Activated CD4-positive, alpha-beta memory T cell treated with anti-CD3 and anti-CD28 coated beads, Interleukin-2, amount 10 ng/mL, durations not matched to agents 7 days and 5 days (primary cell): ENCODE measurements at regions of chr3 and their contacts with region 1.

Region 1: DNA sequence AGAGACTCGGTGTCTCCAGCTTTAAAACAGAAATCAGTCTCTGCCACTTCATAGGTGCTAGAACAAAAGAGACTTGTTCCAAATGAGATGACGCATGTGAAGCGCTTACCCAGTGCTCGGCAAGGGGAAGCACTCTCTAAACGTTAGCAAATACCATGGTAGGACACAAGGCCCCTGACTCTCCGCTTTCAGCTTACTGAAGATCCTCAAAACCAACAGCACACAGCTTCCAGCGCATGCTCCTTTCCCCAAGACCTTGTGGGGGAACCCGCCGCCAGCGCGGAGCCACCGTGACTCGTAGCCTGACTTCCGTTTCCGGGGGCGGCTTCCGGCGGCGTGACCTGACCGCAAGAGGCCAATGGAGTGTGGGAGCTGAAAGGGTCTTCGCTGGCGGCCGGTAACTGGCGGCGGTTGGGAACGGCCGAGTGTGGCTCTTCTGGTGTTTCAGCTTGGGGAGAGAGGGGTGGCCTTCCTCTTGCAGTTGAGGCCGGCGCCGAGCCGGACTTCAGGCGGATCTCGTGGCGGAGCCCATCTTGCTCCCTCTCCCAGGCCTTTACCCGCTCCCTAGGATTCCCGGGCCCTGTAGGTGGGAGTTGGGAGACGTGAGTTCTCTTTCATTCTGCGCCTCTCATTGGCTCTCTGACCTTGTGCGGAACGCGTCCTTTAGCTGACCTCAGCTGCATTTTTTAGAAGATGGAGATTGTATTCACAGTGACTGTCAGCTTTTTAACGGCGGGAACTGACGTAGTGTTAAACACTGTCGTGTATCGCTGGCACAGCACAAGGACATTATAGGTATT is at the start of gene THUMPD3:
- DNase-seq: peak; percentile 92
- H3K4me3 Mint-ChIP-seq: peak within 1 kb of the TSS; percentile 95
- H3K27ac Mint-ChIP-seq: peak within 1 kb of the TSS; percentile 98
- H3K4me1 Mint-ChIP-seq: peaks cover 39% of the 10 kb centered on the region
- H3K27me3 Mint-ChIP-seq: no peaks in the 10 kb centered on the region
- total RNA-seq, gene THUMPD3: 44.3 to 47.2 TPM

Region 2: DNA sequence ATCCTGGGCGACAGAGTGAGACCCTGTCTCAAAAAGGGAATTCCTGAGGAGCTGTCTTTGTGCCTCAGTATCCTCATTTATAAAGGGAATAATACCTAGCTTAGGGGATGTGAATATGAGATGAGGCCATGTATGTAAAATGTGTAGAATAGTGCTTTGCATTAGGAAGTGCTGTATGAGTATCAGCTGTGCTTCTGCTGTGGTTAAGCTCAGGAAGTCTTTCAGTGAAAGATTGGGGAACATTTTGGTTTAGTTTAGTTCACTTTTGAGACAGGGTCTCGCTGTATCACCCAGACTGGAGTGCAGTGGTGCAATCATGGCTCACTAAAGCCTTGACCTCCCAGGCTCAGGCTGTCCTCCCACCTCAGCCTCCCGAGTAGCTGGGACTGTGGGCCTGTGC is 10.5 kb after region 1 on chr3:
- CTCF ChIA-PET with region 1: interaction called, 12 read pairs
- POLR2A ChIA-PET with region 1: interaction called, 24 read pairs
- DNase-seq: no peak
- H3K4me3 Mint-ChIP-seq: no peak overlapping the region
- H3K27ac Mint-ChIP-seq: peak overlapping the region; percentile 16
- H3K4me1 Mint-ChIP-seq: peaks cover 21% of the 10 kb centered on the region
- H3K27me3 Mint-ChIP-seq: no peaks in the 10 kb centered on the region

Region 3: GRCh38 chr3:9384141-9384853 is 21.4 kb after region 1 on chr3:
- CTCF ChIA-PET with region 1: no interaction called
- POLR2A ChIA-PET with region 1: interaction called, 19 read pairs
- DNase-seq: no peak
- H3K4me3 Mint-ChIP-seq: no peak overlapping the region
- H3K27ac Mint-ChIP-seq: no peak overlapping the region
- H3K4me1 Mint-ChIP-seq: peaks cover 5% of the 10 kb centered on the region
- H3K27me3 Mint-ChIP-seq: no peaks in the 10 kb centered on the region

Region 4: DNA sequence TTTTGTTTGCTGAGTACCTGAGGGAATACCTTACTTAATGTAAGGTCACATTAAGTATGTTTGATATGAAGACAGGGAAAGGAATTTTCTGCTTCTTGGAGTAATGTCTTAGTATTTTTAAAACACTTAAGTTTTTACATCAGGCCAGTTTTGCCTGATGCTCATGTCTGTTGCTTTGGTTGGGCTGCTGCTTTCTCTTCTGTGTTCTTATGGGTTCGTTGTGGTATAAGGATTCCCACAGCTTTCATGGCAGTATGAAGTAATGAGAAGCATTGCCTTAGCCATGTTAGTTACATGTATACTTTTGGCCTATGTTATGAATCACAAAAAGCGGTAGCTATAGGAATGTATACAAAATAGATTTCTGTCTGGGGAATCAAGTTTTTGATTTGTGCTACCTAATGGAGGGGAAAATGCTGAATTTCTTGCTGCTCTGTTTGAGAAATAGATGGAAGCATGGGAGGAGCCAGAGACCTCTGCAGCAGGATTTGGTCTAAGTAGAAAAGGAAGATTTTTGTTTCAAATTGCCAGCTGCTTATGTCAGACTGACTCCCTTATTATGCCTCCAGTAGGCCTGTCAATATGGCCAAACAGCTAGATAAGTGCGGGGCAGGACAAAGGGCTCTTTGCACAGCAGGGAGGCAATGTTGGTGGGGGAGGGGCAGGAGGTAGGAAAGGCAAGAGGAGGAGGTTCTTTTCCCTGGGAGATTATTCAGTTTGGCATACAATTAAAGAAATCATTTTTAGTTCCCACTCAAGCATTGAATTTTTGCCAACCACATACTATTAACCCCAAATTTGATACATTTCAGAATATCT is 39.7 kb after region 1 on chr3:
- CTCF ChIA-PET with region 1: interaction called, 10 read pairs
- POLR2A ChIA-PET with region 1: interaction called, 257 read pairs
- DNase-seq: no peak
- H3K4me3 Mint-ChIP-seq: no peak overlapping the region
- H3K27ac Mint-ChIP-seq: no peak overlapping the region
- H3K4me1 Mint-ChIP-seq: peaks cover 60% of the 10 kb centered on the region
- H3K27me3 Mint-ChIP-seq: no peaks in the 10 kb centered on the region

Region 5: DNA sequence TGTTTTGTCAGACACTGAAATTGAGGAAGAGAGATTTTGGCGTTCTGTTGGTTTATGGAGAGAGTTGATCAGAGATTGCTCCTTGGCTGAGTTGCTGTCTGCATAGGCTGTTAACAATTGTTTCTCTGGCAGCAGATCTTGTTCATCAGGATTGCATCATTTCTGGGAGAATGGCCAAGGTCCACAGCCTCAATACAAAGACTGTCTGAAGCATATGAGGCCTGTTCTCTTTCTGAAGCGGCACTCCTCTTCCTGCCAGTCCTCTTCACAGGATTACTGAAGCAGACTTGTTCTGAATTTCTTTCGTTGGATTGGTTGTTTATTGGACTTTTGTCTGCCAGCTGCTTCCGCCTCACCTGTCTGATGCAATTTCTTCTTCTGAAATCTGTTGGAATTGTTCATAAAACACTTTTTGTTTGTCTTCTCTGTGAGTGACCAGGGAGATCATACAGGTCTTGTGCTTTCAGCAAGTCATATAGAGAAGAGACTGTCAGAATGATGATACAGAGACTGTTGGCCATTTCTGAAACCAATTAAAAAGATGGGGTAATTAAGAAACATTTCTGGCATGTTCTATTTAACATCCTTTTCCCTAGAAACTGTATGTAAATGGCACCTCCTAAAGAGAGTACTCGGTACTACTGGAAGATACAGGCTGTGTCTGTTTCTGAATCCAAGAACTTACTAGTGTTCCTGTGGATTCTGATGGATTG is 59.9 kb after region 1 on chr3:
- CTCF ChIA-PET with region 1: interaction called, 4 read pairs
- POLR2A ChIA-PET with region 1: interaction called, 11 read pairs
- DNase-seq: no peak
- H3K4me3 Mint-ChIP-seq: no peak overlapping the region
- H3K27ac Mint-ChIP-seq: peak overlapping the region; percentile 60
- H3K4me1 Mint-ChIP-seq: peaks cover 38% of the 10 kb centered on the region
- H3K27me3 Mint-ChIP-seq: no peaks in the 10 kb centered on the region

Region 6: GRCh38 chr3:9569054-9569453 is 206.1 kb after region 1 on chr3:
- CTCF ChIA-PET with region 1: no interaction called
- POLR2A ChIA-PET with region 1: no interaction called
- DNase-seq: no peak
- H3K4me3 Mint-ChIP-seq: no peak overlapping the region
- H3K27ac Mint-ChIP-seq: no peak overlapping the region
- H3K4me1 Mint-ChIP-seq: no peaks in the 10 kb centered on the region
- H3K27me3 Mint-ChIP-seq: peaks cover 8% of the 10 kb centered on the region

Region 7: DNA sequence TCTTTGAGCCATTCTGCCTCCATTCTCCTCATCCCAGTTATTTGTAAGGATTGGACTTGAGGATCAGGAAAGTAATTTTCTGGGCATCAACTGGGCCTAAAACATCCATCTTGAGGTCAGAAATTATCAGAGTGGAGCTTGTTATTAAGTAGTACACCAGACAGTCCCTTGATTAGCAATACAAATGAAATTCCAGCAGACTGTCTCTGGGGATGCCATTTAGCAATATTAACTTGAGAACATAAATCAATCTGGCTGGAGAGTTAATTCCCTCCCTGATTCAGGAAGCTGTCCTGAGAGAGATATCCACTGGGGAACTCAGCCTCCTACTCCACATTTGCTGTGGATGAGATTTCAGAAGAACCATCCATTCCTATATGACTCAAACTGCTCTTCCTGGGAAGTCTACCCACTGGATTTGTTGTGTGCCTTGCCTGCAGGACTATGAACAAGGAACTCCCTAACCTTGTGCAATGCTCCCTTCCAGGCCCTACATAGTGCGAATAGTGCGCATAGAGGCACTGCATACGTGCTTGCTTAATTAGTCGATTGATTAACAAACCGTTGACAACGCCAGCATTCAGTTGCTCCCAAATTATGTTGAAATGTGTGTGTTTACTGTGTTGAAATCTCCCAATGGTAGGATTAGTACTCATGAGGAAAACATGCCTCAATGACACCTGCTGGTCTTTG is 250.3 kb after region 1 on chr3:
- CTCF ChIA-PET with region 1: no interaction called
- POLR2A ChIA-PET with region 1: no interaction called
- DNase-seq: no peak
- H3K4me3 Mint-ChIP-seq: no peak overlapping the region
- H3K27ac Mint-ChIP-seq: no peak overlapping the region
- H3K4me1 Mint-ChIP-seq: no peaks in the 10 kb centered on the region
- H3K27me3 Mint-ChIP-seq: peaks cover 8% of the 10 kb centered on the region

Region 8: DNA sequence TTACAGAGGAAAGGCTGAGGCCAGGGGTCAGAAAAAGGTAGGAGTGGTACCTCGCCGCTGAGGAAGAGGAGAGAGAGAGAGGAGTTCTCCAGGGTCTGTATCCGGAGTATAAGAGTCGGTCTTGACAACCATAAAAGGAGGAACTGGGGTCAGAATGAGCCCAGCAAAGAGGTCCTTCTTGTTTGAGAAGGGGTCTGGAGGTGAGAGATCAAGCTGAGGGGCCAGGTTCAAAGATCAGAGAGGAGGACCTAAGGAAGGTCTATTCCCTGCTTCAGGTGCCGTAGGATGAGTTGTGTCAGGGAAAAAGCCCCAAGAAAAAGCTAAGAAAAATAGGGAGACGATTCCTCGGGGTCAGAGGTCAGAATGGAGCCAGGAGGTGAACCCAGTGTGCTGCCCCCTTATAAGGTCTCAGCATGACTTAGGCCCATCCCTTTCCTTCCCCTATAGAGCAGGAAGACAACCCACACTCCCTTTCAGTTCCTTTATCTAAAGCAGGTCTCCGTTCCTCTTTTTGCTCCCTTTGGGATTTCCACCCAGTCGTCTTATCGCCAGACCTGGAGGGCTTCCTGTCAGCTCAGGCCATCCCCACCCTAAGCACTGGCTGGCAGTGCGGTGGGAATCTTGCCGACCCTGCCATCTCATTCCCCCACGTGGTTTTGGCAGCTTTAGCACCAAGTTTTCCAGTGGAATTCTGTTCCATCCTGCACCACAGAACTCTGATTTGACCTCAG is 287.0 kb after region 1 on chr3:
- CTCF ChIA-PET with region 1: interaction called, 10 read pairs
- POLR2A ChIA-PET with region 1: interaction called, 12 read pairs
- DNase-seq: peak; percentile 21
- H3K4me3 Mint-ChIP-seq: peak overlapping the region; percentile 87
- H3K27ac Mint-ChIP-seq: peak overlapping the region; percentile 87
- H3K4me1 Mint-ChIP-seq: peaks cover 18% of the 10 kb centered on the region
- H3K27me3 Mint-ChIP-seq: no peaks in the 10 kb centered on the region